Activated CD4-positive, alpha-beta T cell treated with anti-CD3 and anti-CD28 coated beads for 36 hours (primary cell): ENCODE measurements at regions of chr5 and their contacts with region 1.

Region 1: DNA sequence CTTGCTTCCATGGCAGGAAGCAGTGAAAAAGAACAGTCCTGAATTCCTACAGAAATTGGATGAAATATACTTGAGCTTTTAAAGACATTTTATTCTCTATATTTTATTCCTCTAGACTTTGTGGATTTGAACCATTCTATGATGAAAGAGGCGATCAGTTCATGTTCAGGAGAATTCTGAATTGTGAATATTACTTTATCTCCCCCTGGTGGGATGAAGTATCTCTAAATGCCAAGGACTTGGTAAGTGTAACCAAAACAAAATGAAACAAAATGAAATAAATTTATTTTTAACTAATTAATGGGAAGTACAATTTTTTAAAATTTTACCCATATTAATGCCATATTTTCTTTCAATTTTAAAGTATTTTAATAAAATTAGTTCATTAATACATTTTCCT is 34.1 kb downstream of the STARD4 start:
- DNase-seq: no peak
- ATAC-seq: no peak
- H3K4me3 Mint-ChIP-seq: no peak overlapping the region
- H3K27ac Mint-ChIP-seq: no peak overlapping the region
- H3K4me1 Mint-ChIP-seq: no peaks in the 10 kb centered on the region
- H3K27me3 Mint-ChIP-seq: no peaks in the 10 kb centered on the region

Region 2: GRCh38 chr5:111072949-111073682 is 405.1 kb before region 1 on chr5:
- CTCF ChIA-PET with region 1: no interaction called
- POLR2A ChIA-PET with region 1: no interaction called
- intact Hi-C with region 1: no loop called
- DNase-seq: peak; percentile 82
- ATAC-seq: peak; percentile 73
- H3K4me3 Mint-ChIP-seq: peak overlapping the region; percentile 81
- H3K27ac Mint-ChIP-seq: peak overlapping the region; percentile 37
- H3K4me1 Mint-ChIP-seq: peaks cover 24% of the 10 kb centered on the region
- H3K27me3 Mint-ChIP-seq: peaks cover 62% of the 10 kb centered on the region

Region 3: GRCh38 chr5:111158105-111158744 is 320.0 kb before region 1 on chr5:
- CTCF ChIA-PET with region 1: interaction called, 12 read pairs
- POLR2A ChIA-PET with region 1: no interaction called
- intact Hi-C with region 1: loop called (anchors 1 to 2 kb)
- DNase-seq: peak; percentile 88
- ATAC-seq: peak; percentile 67
- H3K4me3 Mint-ChIP-seq: no peak overlapping the region
- H3K27ac Mint-ChIP-seq: no peak overlapping the region
- H3K4me1 Mint-ChIP-seq: peaks cover 11% of the 10 kb centered on the region
- H3K27me3 Mint-ChIP-seq: no peaks in the 10 kb centered on the region

Region 4: GRCh38 chr5:111432883-111433536 is 45.3 kb before region 1 on chr5:
- CTCF ChIA-PET with region 1: no interaction called
- POLR2A ChIA-PET with region 1: no interaction called
- intact Hi-C with region 1: no loop called
- DNase-seq: no peak
- ATAC-seq: no peak
- H3K4me3 Mint-ChIP-seq: no peak overlapping the region
- H3K27ac Mint-ChIP-seq: no peak overlapping the region
- H3K4me1 Mint-ChIP-seq: peaks cover 32% of the 10 kb centered on the region
- H3K27me3 Mint-ChIP-seq: no peaks in the 10 kb centered on the region

Region 5: GRCh38 chr5:111447822-111448221 is 30.4 kb before region 1 on chr5:
- CTCF ChIA-PET with region 1: no interaction called
- POLR2A ChIA-PET with region 1: no interaction called
- intact Hi-C with region 1: no loop called
- DNase-seq: no peak
- ATAC-seq: no peak
- H3K4me3 Mint-ChIP-seq: no peak overlapping the region
- H3K27ac Mint-ChIP-seq: no peak overlapping the region
- H3K4me1 Mint-ChIP-seq: peaks cover 22% of the 10 kb centered on the region
- H3K27me3 Mint-ChIP-seq: no peaks in the 10 kb centered on the region

Region 6: GRCh38 chr5:111810112-111810511 is 331.8 kb after region 1 on chr5:
- CTCF ChIA-PET with region 1: no interaction called
- POLR2A ChIA-PET with region 1: no interaction called
- intact Hi-C with region 1: no loop called
- DNase-seq: no peak
- ATAC-seq: peak; percentile 30
- H3K4me3 Mint-ChIP-seq: no peak overlapping the region
- H3K27ac Mint-ChIP-seq: no peak overlapping the region
- H3K4me1 Mint-ChIP-seq: no peaks in the 10 kb centered on the region
- H3K27me3 Mint-ChIP-seq: peaks cover 2% of the 10 kb centered on the region